ENCODE measurements at regions of chr6 and their contacts with region 1.

Region 1: GRCh38 chr6:106659859-106660258 is 30.5 kb downstream of the QRSL1 start:
- DNase-seq: no peak
- ATAC-seq: no peak
- H3K4me3 ChIP-seq: no peak overlapping the region
- H3K27ac ChIP-seq: no peak overlapping the region
- H3K4me1 ChIP-seq: no peaks in the 10 kb centered on the region
- H3K27me3 ChIP-seq: no peaks in the 10 kb centered on the region
- CTCF ChIP-seq: no peak

Region 2: DNA sequence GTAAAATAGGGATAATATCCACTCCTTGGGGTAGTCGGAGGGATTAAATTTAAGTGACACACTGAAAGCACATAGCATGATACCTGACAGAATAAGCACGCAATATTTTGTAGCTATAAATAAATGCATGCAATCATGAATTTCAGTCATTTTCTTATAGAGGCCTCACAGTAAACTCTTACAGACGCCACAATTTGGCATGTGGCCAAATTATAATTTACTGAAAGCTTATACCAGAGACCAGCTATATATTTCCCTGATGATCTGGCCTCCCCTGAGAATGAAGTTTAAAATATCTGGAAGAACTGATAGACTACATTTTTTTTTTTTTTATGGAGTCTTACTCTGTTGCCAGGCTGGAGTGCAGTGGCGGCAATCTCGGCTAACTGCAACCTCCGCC is 10.4 kb after region 1 on chr6:
- CTCF ChIA-PET with region 1: no interaction called
- POLR2A ChIA-PET with region 1: no interaction called
- in situ Hi-C with region 1: no loop called
- intact Hi-C with region 1: no loop called
- DNase-seq: no peak
- ATAC-seq: no peak
- H3K4me3 ChIP-seq: no peak overlapping the region
- H3K27ac ChIP-seq: no peak overlapping the region
- H3K4me1 ChIP-seq: no peaks in the 10 kb centered on the region
- H3K27me3 ChIP-seq: no peaks in the 10 kb centered on the region
- CTCF ChIP-seq: no peak

Region 3: GRCh38 chr6:107009499-107009898 is 349.6 kb after region 1 on chr6:
- CTCF ChIA-PET with region 1: interaction called, 10 read pairs
- POLR2A ChIA-PET with region 1: no interaction called
- in situ Hi-C with region 1: no loop called
- intact Hi-C with region 1: no loop called
- DNase-seq: no peak
- ATAC-seq: no peak
- H3K4me3 ChIP-seq: no peak overlapping the region
- H3K27ac ChIP-seq: no peak overlapping the region
- H3K4me1 ChIP-seq: no peaks in the 10 kb centered on the region
- H3K27me3 ChIP-seq: no peaks in the 10 kb centered on the region
- CTCF ChIP-seq: no peak